ENCODE measurements at regions of chr3 and their contacts with region 1.

Region 1: GRCh38 chr3:53938645-53939044 is 47.0 kb upstream of the SELENOK start:
- DNase-seq: peak in 1 of 2 experiments; percentile 69
- H3K4me3 ChIP-seq: no peak overlapping the region
- H3K27ac ChIP-seq: no peak overlapping the region
- H3K4me1 ChIP-seq: no peaks in the 10 kb centered on the region
- H3K27me3 ChIP-seq: no peaks in the 10 kb centered on the region
- CTCF ChIP-seq: peak in 2 of 3 experiments; percentile 67 to 77; a peak in 3 of 4 replicates
- EP300 ChIP-seq: no peak
- POLR2A ChIP-seq: no peak
- RAD21 ChIP-seq: peak; percentile 86 to 90

Region 2: DNA sequence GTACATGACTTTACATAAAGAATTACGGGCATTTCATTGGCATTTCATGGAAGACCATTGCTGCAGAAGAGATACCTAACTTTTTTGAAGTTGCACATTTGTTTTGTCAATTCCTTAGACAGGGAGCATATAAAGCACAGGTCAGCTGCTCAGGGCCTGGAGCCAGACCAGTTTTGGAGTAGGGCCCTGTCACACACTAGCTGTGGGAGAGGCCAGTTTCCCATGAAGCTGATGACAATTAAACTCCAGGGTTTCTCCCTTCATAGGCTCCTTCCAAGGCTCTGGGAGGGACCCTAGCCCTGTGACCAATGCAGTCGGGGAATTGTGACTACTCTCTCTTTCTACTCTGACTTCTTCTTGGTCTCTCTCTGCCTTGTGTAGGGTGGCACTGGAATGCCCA is 60.3 kb after region 1 on chr3:
- CTCF ChIA-PET with region 1: interaction called, 18 read pairs
- POLR2A ChIA-PET with region 1: no interaction called
- DNase-seq: no peak
- H3K4me3 ChIP-seq: no peak overlapping the region
- H3K27ac ChIP-seq: no peak overlapping the region
- H3K4me1 ChIP-seq: peaks cover 0 to 3% (median 0%) of the 10 kb centered on the region in 4 experiments; a peak in 1 of 7 replicates
- H3K27me3 ChIP-seq: no peaks in the 10 kb centered on the region; a peak in 1 of 7 replicates
- CTCF ChIP-seq: no peak
- EP300 ChIP-seq: no peak
- POLR2A ChIP-seq: no peak
- RAD21 ChIP-seq: no peak

Region 3: GRCh38 chr3:54120657-54121413 is 182.2 kb after region 1 on chr3:
- CTCF ChIA-PET with region 1: interaction called, 16 read pairs
- POLR2A ChIA-PET with region 1: interaction called, 4 read pairs
- DNase-seq: peak in 1 of 2 experiments; percentile 73
- H3K4me3 ChIP-seq: peak overlapping the region; percentile 60 to 67 (median 62)
- H3K27ac ChIP-seq: no peak overlapping the region
- H3K4me1 ChIP-seq: peaks cover 5 to 15% (median 7%) of the 10 kb centered on the region in 4 experiments
- H3K27me3 ChIP-seq: peaks cover 35 to 53% (median 43%) of the 10 kb centered on the region in 4 experiments
- CTCF ChIP-seq: peak in 2 of 3 experiments; percentile 8 to 24; a peak in 2 of 4 replicates
- EP300 ChIP-seq: no peak
- POLR2A ChIP-seq: no peak
- RAD21 ChIP-seq: peak; percentile 12 to 37; a peak in 3 of 4 replicates

Region 4: DNA sequence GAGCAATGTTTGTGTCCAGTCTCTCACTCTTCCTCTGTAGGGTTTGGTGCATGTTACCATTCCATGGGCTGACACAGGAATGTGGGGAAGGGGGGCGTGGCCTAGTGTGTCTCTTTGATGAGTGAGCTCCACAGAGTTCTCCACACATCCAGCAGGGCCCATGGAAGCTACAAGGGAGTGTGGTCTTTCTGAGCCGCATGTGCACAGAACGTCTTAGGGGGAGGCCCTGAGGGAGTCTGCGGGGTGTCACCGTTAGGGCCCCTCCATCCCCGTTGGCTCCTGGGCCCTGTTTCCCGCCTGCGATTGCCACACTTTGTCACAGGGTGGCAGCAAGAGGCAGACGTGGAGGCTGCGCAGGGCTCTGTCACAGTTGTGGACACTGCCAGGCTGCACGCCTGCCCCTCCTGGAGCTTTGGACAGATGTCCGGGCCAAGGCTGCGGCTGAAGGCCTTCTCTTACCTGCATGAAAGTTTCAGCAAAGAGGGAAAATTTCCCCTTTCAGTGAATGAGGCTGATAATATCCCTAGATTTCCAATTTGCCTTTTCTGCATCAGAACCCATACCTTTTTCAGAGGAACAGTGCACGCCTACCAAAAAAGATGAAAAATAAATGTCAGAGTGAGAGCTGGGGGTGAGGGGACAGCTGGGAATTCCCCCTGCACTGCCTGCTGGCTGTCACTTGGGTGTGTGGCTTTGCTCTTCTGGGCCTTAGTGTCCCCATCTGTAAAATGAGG is 208.0 kb after region 1 on chr3:
- CTCF ChIA-PET with region 1: interaction called, 16 read pairs
- POLR2A ChIA-PET with region 1: no interaction called
- DNase-seq: peak in 1 of 2 experiments; percentile 83
- H3K4me3 ChIP-seq: no peak overlapping the region
- H3K27ac ChIP-seq: no peak overlapping the region
- H3K4me1 ChIP-seq: peaks cover 0 to 3% (median 0%) of the 10 kb centered on the region in 4 experiments; a peak in 2 of 7 replicates
- H3K27me3 ChIP-seq: no peaks in the 10 kb centered on the region
- CTCF ChIP-seq: peak; percentile 94 to 96 (median 96)
- EP300 ChIP-seq: no peak
- POLR2A ChIP-seq: no peak
- RAD21 ChIP-seq: peak; percentile 98

Region 5: GRCh38 chr3:54374214-54374855 is 435.7 kb after region 1 on chr3:
- CTCF ChIA-PET with region 1: interaction called, 33 read pairs
- POLR2A ChIA-PET with region 1: no interaction called
- DNase-seq: peak in 1 of 2 experiments; percentile 55
- H3K4me3 ChIP-seq: no peak overlapping the region
- H3K27ac ChIP-seq: no peak overlapping the region
- H3K4me1 ChIP-seq: no peaks in the 10 kb centered on the region
- H3K27me3 ChIP-seq: no peaks in the 10 kb centered on the region
- CTCF ChIP-seq: peak; percentile 61 to 78 (median 73)
- EP300 ChIP-seq: no peak
- POLR2A ChIP-seq: no peak
- RAD21 ChIP-seq: peak; percentile 87 to 88